ENCODE measurements at regions of chr6 and their contacts with region 1.

Region 1: DNA sequence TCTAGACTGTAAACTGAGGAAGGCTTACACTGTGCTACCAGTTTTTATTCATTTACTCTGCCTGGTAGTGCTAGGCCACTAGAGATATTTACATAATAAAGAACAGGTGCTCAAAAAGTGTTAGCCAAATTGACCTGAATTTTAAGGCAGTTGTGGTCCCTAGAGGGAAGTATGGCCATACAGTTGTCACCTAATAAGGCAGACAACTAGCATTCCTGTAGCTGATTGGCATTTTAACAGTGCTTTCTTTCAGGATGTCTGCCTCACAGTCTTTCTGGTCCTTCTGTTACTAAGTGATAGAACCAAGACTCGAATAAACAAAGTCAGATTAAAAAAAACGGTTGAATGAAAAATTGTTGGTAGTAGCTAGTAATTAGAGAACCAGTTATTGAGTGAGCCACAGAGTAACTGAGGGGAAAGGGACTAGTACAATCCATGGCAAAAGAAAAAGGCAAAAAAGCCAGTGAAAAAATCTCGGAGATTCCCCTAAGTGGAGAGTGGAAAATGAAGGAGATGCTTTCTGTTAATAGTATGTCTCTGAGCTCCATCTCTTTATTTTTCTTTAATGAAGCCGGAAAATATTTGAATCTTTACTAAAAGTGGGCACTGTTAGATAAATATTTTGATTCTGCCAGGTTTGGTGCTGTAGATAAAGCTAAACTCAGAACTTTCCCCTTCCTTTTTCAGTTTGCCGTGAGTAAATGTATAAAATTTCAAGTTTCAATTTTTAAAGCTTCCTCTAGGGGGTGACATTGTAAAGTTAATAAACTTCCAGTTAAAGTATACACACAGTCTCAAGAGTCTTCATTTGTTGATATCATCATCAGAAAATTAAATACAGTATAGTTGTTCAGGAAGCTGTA is 9.1 kb downstream of the VTA1 start:
- DNase-seq: no peak
- H3K4me3 Mint-ChIP-seq: no peak overlapping the region
- H3K27ac Mint-ChIP-seq: no peak overlapping the region
- H3K4me1 Mint-ChIP-seq: peaks cover 53% of the 10 kb centered on the region
- H3K27me3 Mint-ChIP-seq: no peaks in the 10 kb centered on the region

Region 2: DNA sequence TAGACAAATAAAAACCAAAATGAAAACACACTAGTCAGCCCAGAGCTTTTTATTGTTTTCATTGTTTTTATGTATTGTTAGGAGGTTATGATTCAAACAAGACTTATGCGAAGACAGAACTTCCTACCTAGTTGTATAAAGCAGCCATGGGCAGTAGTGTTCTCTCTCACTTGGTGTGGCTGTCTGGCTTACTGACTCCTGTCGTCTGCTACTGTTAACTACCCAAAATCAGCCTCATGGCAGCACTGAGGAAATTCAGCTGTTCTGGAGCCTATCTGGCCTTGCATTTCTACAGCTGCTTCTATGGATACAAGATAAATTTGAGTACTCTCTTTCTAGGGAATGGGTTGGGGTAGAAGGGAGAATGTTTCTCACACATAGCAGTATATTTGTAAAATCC is 11.4 kb after region 1 on chr6:
- CTCF ChIA-PET with region 1: interaction called, 19 read pairs
- intact Hi-C with region 1: no loop called
- DNase-seq: no peak
- H3K4me3 Mint-ChIP-seq: no peak overlapping the region
- H3K27ac Mint-ChIP-seq: no peak overlapping the region
- H3K4me1 Mint-ChIP-seq: peaks cover 6% of the 10 kb centered on the region
- H3K27me3 Mint-ChIP-seq: no peaks in the 10 kb centered on the region

Region 3: GRCh38 chr6:142177201-142177600 is 21.1 kb after region 1 on chr6:
- CTCF ChIA-PET with region 1: interaction called, 12 read pairs
- intact Hi-C with region 1: no loop called
- DNase-seq: no peak
- H3K4me3 Mint-ChIP-seq: no peak overlapping the region
- H3K27ac Mint-ChIP-seq: no peak overlapping the region
- H3K4me1 Mint-ChIP-seq: peaks cover 2% of the 10 kb centered on the region
- H3K27me3 Mint-ChIP-seq: no peaks in the 10 kb centered on the region

Region 4: DNA sequence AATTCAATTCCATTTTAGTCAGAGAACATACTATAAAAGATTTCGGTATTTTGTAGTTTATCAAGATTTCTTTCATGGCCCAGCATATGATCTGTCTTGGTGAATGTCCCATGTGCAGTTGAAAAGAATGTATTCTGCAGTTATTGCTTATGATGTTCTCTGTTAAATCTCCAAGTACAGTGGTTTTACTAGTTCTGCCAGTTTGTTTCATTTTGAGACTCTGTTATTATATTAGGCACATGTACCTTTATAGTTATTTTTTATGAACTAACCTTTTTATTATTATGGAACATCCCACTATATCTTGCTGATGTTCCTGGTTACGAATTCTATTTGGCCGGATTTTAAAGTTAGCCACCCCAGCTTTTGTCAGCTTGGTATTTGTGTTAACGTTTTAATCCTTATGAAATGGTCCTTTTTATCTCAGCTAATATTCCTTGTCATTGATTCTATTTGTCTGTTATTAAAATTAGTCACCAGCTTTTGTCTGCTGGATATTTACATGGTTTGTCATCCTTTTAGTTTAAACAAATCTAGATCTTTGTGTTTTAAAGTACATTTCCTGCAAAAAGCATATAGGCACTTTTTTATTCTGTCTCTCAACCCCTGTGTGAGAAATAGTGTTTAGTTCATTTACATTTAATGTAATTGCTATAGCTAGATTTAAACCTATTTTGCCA is 39.9 kb after region 1 on chr6:
- CTCF ChIA-PET with region 1: interaction called, 10 read pairs
- intact Hi-C with region 1: no loop called
- DNase-seq: no peak
- H3K4me3 Mint-ChIP-seq: no peak overlapping the region
- H3K27ac Mint-ChIP-seq: no peak overlapping the region
- H3K4me1 Mint-ChIP-seq: peaks cover 33% of the 10 kb centered on the region
- H3K27me3 Mint-ChIP-seq: no peaks in the 10 kb centered on the region

Region 5: GRCh38 chr6:142207265-142207877 is 51.2 kb after region 1 on chr6:
- CTCF ChIA-PET with region 1: interaction called, 19 read pairs
- intact Hi-C with region 1: loop called (anchors 1 kb)
- DNase-seq: peak; percentile 62
- H3K4me3 Mint-ChIP-seq: no peak overlapping the region
- H3K27ac Mint-ChIP-seq: no peak overlapping the region
- H3K4me1 Mint-ChIP-seq: peaks cover 2% of the 10 kb centered on the region
- H3K27me3 Mint-ChIP-seq: no peaks in the 10 kb centered on the region

Region 6: DNA sequence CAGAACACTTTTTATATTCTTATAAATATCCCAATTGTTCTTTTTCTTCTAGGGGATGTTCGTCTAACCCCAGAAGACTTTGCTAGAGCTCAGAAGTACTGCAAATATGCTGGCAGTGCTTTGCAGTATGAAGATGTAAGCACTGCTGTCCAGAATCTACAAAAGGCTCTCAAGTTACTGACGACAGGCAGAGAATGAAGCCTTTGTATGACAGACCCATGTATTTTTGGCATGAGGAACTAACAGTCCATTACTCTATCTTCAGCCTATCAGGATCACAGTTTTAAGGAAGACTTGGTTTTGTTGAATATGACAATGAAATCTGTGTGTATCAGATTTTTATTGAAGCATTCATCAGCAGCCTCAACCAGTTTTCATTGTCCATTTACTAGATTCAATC is 62.3 kb after region 1 on chr6:
- CTCF ChIA-PET with region 1: no interaction called
- intact Hi-C with region 1: no loop called
- DNase-seq: no peak
- H3K4me3 Mint-ChIP-seq: no peak overlapping the region
- H3K27ac Mint-ChIP-seq: no peak overlapping the region
- H3K4me1 Mint-ChIP-seq: no peaks in the 10 kb centered on the region
- H3K27me3 Mint-ChIP-seq: no peaks in the 10 kb centered on the region

Region 7: DNA sequence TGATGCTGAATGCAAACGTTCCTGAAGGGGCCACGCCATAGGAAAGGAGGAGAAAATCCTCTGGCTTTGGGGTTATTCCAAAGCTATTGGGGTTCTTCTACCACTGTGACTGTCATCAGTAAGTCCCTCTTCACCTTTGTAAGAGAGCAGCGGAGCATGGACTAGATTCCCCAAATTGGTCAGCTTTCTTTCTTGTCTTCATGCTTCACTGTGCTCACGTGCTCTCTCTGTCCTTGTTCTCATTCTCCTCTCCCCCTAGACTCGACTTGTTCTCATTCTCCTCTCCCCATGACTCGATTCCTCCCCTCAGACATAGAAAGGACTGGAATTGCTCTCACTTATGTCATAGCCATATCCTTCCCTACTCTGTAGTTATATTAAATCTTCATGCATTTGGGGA is 90.8 kb after region 1 on chr6:
- CTCF ChIA-PET with region 1: no interaction called
- intact Hi-C with region 1: no loop called
- DNase-seq: no peak
- H3K4me3 Mint-ChIP-seq: no peak overlapping the region
- H3K27ac Mint-ChIP-seq: no peak overlapping the region
- H3K4me1 Mint-ChIP-seq: no peaks in the 10 kb centered on the region
- H3K27me3 Mint-ChIP-seq: no peaks in the 10 kb centered on the region

Region 8: DNA sequence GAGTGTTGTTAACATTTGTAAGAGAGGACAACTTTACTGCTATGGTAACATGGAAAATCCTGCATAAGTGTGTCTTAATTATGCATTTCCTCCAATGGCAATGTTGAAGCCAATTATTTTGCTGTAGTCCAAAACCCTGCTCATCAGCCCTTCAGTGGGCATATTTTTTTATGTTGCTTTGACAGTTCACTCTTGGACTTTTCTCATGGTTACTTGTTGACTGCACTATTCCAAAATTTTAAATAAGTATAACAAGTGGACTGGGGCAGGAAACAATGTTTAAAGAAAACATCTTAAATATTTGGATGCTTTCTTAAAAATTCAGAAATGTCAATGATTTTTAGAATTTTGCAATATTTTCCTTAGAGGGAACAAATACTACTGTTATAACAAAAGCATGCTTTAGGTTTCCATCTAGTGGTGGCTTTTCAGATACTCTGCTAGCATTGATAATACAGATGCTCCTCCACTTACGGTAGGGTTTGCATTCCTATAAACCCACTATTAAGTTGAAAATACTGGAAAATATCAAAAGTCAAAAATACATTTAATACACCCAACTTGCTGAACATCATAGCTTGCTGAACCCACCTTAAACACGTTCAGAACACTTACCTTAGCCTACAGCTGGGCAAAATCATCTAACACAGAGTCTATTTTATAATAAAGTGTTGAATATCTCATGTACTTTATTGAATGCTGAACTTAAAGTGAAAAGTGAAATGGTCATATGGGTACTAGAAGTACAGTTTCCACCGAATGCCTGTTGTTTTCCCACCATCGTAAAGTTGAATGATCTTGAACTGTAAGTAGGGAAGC is 232.1 kb after region 1 on chr6:
- CTCF ChIA-PET with region 1: no interaction called
- intact Hi-C with region 1: loop called (anchors 1 kb)
- DNase-seq: no peak
- H3K4me3 Mint-ChIP-seq: no peak overlapping the region
- H3K27ac Mint-ChIP-seq: no peak overlapping the region
- H3K4me1 Mint-ChIP-seq: no peaks in the 10 kb centered on the region
- H3K27me3 Mint-ChIP-seq: no peaks in the 10 kb centered on the region